ENCODE measurements at regions of chr11 and their contacts with region 1.

Region 1: GRCh38 chr11:125481531-125481930 is 14.5 kb downstream of the FEZ1 start:
- DNase-seq: no peak
- ATAC-seq: no peak
- H3K4me3 ChIP-seq: no peak overlapping the region
- H3K27ac ChIP-seq: no peak overlapping the region
- H3K4me1 ChIP-seq: no peaks in the 10 kb centered on the region
- H3K27me3 ChIP-seq: peaks cover 11% of the 10 kb centered on the region
- CTCF ChIP-seq: no peak

Region 2: GRCh38 chr11:125370561-125371389 is 110.8 kb before region 1 on chr11:
- CTCF ChIA-PET with region 1: interaction called, 10 read pairs
- POLR2A ChIA-PET with region 1: no interaction called
- in situ Hi-C with region 1: no loop called
- intact Hi-C with region 1: no loop called
- DNase-seq: no peak
- ATAC-seq: no peak
- H3K4me3 ChIP-seq: no peak overlapping the region
- H3K27ac ChIP-seq: no peak overlapping the region
- H3K4me1 ChIP-seq: no peaks in the 10 kb centered on the region
- H3K27me3 ChIP-seq: peaks cover 34% of the 10 kb centered on the region
- CTCF ChIP-seq: no peak